Activated CD4-positive, alpha-beta T cell treated with anti-CD3 and anti-CD28 coated beads, Interleukin-2, amount 10 ng/mL, durations not matched to agents 7 days and 5 days (primary cell): ENCODE measurements at regions of chr14 and their contacts with region 1.

Region 1: GRCh38 chr14:22556990-22557623 is 31.9 kb downstream of the DAD1 start:
- DNase-seq: peak; percentile 89
- H3K4me3 Mint-ChIP-seq: peak overlapping the region; percentile 75
- H3K27ac Mint-ChIP-seq: peak overlapping the region; percentile 94
- H3K4me1 Mint-ChIP-seq: peaks cover 86% of the 10 kb centered on the region
- H3K27me3 Mint-ChIP-seq: peaks cover 2% of the 10 kb centered on the region

Region 2: DNA sequence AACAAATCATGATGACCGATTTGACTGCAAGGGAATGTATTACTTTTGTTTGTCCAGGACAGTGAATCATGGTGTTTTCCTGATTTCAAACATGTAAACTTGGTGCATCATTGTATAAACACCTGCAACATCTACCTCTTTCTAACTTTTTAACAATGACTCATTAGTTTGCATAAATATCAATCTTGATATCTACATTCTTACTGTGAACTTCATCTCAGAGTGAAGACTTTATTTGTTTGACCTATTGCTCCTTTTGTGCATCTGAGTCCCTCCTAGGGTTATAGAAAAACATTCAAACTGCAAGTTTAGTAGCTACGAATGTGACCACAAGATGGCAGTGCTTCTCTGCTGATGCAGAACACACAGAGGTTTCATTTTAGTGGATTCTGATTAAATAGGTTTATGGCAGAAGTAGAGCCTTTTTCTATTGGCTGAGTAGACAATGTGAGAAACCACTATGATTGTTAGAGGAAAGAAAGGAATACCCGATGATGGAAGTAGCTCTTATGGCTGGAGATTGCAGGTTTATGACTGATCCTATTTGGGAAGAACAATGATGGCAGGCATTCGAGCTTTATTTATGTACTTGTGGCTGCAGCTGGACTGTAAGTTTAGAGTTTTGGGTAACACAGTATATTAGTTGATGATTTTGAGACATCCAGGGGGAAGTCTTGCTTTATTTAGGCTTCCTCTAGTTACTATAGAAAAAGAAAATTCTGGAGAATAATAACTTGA is 639.2 kb before region 1 on chr14:
- CTCF ChIA-PET with region 1: interaction called, 13 read pairs
- POLR2A ChIA-PET with region 1: interaction called, 3 read pairs
- DNase-seq: peak; percentile 81
- H3K4me3 Mint-ChIP-seq: peak overlapping the region; percentile 72
- H3K27ac Mint-ChIP-seq: peak overlapping the region; percentile 78
- H3K4me1 Mint-ChIP-seq: peaks cover 77% of the 10 kb centered on the region
- H3K27me3 Mint-ChIP-seq: no peaks in the 10 kb centered on the region

Region 3: GRCh38 chr14:21987937-21988336 is 569.2 kb before region 1 on chr14:
- CTCF ChIA-PET with region 1: interaction called, 10 read pairs
- POLR2A ChIA-PET with region 1: no interaction called
- DNase-seq: peak; percentile 30
- H3K4me3 Mint-ChIP-seq: no peak overlapping the region
- H3K27ac Mint-ChIP-seq: peak overlapping the region; percentile 73
- H3K4me1 Mint-ChIP-seq: peaks cover 35% of the 10 kb centered on the region
- H3K27me3 Mint-ChIP-seq: peaks cover 7% of the 10 kb centered on the region

Region 4: DNA sequence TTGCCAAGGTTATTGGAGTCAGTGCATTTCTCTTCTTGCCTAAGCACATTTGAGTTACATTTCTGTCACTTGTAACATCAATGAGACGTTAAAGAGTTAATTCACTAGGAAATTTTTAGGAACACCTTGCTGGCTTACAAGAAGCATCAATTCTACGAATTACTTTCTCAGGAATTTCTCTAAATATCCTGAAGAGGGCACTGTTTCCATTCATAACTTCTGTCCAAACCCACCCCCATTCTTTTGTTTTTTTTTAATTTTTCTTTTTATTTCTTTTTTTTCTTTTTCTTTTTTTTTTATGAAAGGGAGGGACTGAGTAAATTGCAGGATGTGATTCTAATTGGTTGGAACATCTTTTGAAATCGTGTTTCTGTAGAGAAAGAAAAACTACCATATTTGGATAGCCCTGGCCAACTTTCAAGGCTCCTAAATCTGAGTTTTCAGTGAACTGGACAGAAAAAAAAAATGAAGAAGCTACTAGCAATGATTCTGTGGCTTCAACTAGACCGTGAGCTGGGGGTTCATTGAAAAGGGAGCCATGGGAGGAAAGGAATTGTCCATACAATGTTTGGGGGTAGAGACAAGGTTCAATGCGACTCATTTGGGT is 253.4 kb before region 1 on chr14:
- CTCF ChIA-PET with region 1: no interaction called
- POLR2A ChIA-PET with region 1: no interaction called
- DNase-seq: no peak
- H3K4me3 Mint-ChIP-seq: peak overlapping the region; percentile 65
- H3K27ac Mint-ChIP-seq: peak overlapping the region; percentile 46
- H3K4me1 Mint-ChIP-seq: no peaks in the 10 kb centered on the region
- H3K27me3 Mint-ChIP-seq: no peaks in the 10 kb centered on the region

Region 5: DNA sequence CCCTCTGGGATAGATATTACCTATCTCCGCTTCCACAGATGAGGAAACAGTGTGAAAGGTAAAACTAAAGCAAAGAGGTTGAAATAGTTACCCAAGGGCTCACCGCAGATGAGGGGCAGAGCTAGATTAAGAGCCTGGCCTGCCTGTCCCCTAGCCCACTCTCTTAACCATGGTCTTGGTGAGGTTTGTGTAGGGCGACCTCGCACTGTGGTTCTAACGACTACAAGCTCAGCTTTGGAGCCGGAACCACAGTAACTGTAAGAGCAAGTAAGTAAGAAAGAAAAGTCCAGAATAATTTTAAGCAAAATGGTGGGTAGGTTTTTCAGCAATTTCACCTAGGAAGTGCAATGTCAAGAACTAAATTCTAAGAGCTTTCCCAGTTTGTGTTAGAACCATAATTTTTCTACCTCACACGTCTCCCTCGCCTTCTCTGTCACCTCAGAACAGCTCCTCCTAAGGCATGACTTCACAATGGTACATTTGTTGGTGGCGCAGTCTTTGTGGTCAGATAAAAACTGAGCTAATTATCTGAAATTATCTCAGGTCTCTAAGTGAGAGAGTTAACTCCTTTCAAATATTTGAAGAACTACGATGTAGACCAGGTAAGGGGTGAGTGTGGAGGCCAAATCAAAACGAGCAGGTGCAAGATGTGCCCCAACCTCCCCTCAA is 32.9 kb before region 1 on chr14:
- CTCF ChIA-PET with region 1: interaction called, 32 read pairs
- POLR2A ChIA-PET with region 1: interaction called, 7 read pairs
- DNase-seq: no peak
- H3K4me3 Mint-ChIP-seq: peak overlapping the region; percentile 85
- H3K27ac Mint-ChIP-seq: peak overlapping the region; percentile 95
- H3K4me1 Mint-ChIP-seq: peaks cover 90% of the 10 kb centered on the region
- H3K27me3 Mint-ChIP-seq: no peaks in the 10 kb centered on the region

Region 6: GRCh38 chr14:22536853-22537338 is 20.2 kb before region 1 on chr14:
- CTCF ChIA-PET with region 1: interaction called, 53 read pairs
- POLR2A ChIA-PET with region 1: interaction called, 9 read pairs
- DNase-seq: peak; percentile 80
- H3K4me3 Mint-ChIP-seq: peak overlapping the region; percentile 77
- H3K27ac Mint-ChIP-seq: peak overlapping the region; percentile 91
- H3K4me1 Mint-ChIP-seq: peaks cover 95% of the 10 kb centered on the region
- H3K27me3 Mint-ChIP-seq: no peaks in the 10 kb centered on the region

Region 7: DNA sequence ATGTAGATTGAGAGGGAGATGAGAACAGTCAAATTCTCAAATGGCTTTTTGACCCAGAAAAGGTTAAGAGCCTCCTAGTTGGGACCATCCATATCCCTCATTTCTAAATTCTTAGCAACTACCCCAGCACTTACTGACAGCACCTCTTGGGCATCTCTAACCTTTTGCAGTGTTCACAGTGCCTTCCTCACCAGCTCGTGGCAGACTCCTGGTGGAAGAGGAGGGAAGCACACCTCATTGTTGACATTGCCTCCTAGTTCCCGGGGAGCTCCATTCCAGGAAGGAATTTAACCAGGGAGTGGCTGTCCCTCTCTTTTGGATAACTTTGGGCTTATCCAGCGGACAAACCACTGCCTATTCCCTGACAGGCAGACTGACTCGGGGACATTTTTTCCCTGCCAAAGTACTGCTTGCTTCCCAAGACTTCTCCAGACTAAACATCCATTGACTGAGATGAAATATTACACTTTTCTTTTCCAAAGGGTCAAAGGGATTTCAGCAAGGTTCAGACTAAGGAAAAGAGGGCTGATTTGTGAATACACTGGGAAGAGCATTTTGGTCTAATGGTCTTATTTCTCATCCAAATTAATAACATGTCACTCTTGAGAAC is 96.0 kb after region 1 on chr14:
- CTCF ChIA-PET with region 1: interaction called, 17 read pairs
- POLR2A ChIA-PET with region 1: no interaction called
- DNase-seq: peak; percentile 64
- H3K4me3 Mint-ChIP-seq: no peak overlapping the region
- H3K27ac Mint-ChIP-seq: no peak overlapping the region
- H3K4me1 Mint-ChIP-seq: peaks cover 9% of the 10 kb centered on the region
- H3K27me3 Mint-ChIP-seq: no peaks in the 10 kb centered on the region

Region 8: GRCh38 chr14:22748206-22748605 is 191.1 kb after region 1 on chr14:
- CTCF ChIA-PET with region 1: no interaction called
- POLR2A ChIA-PET with region 1: no interaction called
- DNase-seq: no peak
- H3K4me3 Mint-ChIP-seq: no peak overlapping the region
- H3K27ac Mint-ChIP-seq: no peak overlapping the region
- H3K4me1 Mint-ChIP-seq: peaks cover 22% of the 10 kb centered on the region
- H3K27me3 Mint-ChIP-seq: peaks cover 31% of the 10 kb centered on the region

Region 9: DNA sequence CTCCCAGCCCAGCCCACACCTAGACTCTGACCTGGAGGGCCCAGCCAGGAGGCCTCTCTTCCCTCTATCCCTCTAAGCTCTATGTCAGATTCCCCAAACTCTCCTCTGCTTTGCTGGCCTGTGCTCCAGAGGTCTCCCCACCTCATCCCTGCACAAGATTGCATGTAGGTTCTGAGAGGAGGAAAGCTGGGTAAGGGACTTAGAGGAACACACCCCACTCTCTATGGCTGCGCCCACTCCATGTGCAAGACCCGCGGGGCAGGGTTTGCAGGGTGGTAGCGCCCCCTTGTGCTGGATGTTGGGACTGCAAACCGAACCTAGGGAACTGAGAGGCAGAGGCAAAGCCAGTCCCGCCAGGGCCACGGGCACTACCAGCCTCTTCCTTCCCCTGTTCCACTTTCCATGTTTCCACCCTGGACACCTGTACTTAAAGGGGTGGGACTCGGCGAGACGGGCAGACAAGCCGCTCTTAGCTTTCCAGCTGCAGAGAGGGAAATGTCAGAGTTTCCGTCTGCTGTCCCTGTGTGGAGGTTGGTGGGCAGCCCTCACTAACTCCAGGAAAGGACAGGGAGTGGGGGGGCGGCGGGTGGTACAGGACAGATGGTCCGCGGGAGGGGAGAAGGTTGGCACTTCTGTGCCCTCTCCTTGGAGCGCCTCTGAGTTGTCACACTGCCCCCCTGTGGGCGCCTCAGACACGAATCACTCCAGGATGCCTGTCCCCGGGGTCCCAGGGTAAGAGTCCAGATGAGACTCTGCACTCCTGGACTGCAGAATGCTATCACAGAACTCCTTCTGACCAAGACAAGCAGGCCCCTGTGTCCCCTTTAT is 296.0 kb after region 1 on chr14:
- CTCF ChIA-PET with region 1: interaction called, 27 read pairs
- POLR2A ChIA-PET with region 1: no interaction called
- DNase-seq: peak; percentile 87
- H3K4me3 Mint-ChIP-seq: peak overlapping the region; percentile 72
- H3K27ac Mint-ChIP-seq: peak overlapping the region; percentile 66
- H3K4me1 Mint-ChIP-seq: peaks cover 37% of the 10 kb centered on the region
- H3K27me3 Mint-ChIP-seq: peaks cover 28% of the 10 kb centered on the region

Region 10: GRCh38 chr14:23047034-23047634 is 490.0 kb after region 1 on chr14:
- CTCF ChIA-PET with region 1: no interaction called
- POLR2A ChIA-PET with region 1: no interaction called
- DNase-seq: no peak
- H3K4me3 Mint-ChIP-seq: no peak overlapping the region
- H3K27ac Mint-ChIP-seq: no peak overlapping the region
- H3K4me1 Mint-ChIP-seq: no peaks in the 10 kb centered on the region
- H3K27me3 Mint-ChIP-seq: no peaks in the 10 kb centered on the region